ENCODE measurements at regions of chr5 and their contacts with region 1.

Region 1: GRCh38 chr5:56881571-56881970 is 27.8 kb upstream of the SETD9 start:
- DNase-seq: no peak
- ATAC-seq: no peak
- H3K4me3 ChIP-seq: no peak overlapping the region
- H3K4me3 Mint-ChIP-seq: no peak overlapping the region
- H3K27ac ChIP-seq: no peak overlapping the region
- H3K27ac Mint-ChIP-seq: peak overlapping the region; percentile 45
- H3K4me1 ChIP-seq: no peaks in the 10 kb centered on the region
- H3K4me1 Mint-ChIP-seq: peaks cover 8% of the 10 kb centered on the region
- H3K27me3 ChIP-seq: no peaks in the 10 kb centered on the region
- H3K27me3 Mint-ChIP-seq: no peaks in the 10 kb centered on the region
- CTCF ChIP-seq: no peak

Region 2: DNA sequence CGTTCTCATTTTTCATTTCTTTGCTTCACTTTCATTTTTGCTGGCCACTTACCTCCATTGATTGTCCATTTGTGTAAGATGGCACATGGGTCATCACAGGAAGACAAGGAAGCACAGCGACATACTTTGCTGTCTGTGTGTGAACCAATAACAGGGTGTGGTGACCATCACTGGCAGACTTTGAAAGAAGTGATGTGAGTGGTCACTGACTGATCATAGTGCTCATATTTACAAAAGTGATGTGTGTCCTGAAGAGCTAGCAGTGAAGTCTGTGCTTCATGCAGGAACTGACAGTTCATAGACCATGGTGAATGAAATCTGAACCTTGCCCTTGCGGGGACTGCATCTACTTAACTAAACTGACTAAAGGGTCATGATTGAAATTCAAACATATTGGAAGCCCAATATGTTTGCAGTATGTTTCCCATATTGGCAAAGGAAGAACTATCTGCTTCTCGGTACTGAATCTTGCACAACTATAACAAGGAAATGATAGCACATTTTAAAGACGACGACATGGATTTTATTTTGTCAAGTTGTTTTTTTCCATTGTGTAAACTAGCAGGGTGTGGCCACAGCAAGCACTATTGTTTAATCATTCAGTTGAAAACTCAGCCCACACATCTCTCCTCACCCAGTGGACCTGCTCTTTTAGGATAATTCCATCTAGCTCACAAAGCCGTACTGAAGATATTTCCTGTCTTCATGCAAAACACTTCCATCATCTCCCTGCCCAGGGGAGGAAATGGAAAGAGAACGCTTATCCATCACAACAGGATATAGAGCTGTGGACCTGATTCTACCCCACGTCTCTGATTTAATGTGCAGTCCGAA is 416.4 kb before region 1 on chr5:
- CTCF ChIA-PET with region 1: no interaction called
- POLR2A ChIA-PET with region 1: no interaction called
- intact Hi-C with region 1: no loop called
- DNase-seq: no peak
- ATAC-seq: no peak
- H3K4me3 ChIP-seq: no peak overlapping the region
- H3K4me3 Mint-ChIP-seq: no peak overlapping the region
- H3K27ac ChIP-seq: no peak overlapping the region
- H3K27ac Mint-ChIP-seq: no peak overlapping the region
- H3K4me1 ChIP-seq: no peaks in the 10 kb centered on the region
- H3K4me1 Mint-ChIP-seq: no peaks in the 10 kb centered on the region
- H3K27me3 ChIP-seq: no peaks in the 10 kb centered on the region
- H3K27me3 Mint-ChIP-seq: no peaks in the 10 kb centered on the region
- CTCF ChIP-seq: no peak

Region 3: GRCh38 chr5:56862909-56863308 is 18.7 kb before region 1 on chr5:
- CTCF ChIA-PET with region 1: no interaction called
- POLR2A ChIA-PET with region 1: no interaction called
- intact Hi-C with region 1: loop called in 1 of 2 experiments (anchors 2 kb)
- DNase-seq: peak in 2 of 14 experiments; percentile 26 to 36
- ATAC-seq: peak; percentile 56
- H3K4me3 ChIP-seq: no peak overlapping the region
- H3K4me3 Mint-ChIP-seq: no peak overlapping the region
- H3K27ac ChIP-seq: no peak overlapping the region
- H3K27ac Mint-ChIP-seq: no peak overlapping the region
- H3K4me1 ChIP-seq: no peaks in the 10 kb centered on the region
- H3K4me1 Mint-ChIP-seq: peaks cover 28% of the 10 kb centered on the region
- H3K27me3 ChIP-seq: no peaks in the 10 kb centered on the region
- H3K27me3 Mint-ChIP-seq: no peaks in the 10 kb centered on the region
- CTCF ChIP-seq: no peak

Measured in CD4-positive, alpha-beta T cell (primary cell).